ENCODE measurements at regions of chr7 and their contacts with region 1.

Region 1: GRCh38 chr7:25967278-25968204 is 184.5 kb upstream of the NFE2L3 start:
- DNase-seq: no peak
- H3K4me3 ChIP-seq: no peak overlapping the region
- H3K27ac ChIP-seq: no peak overlapping the region
- H3K4me1 ChIP-seq: no peaks in the 10 kb centered on the region
- H3K27me3 ChIP-seq: peaks cover 0 to 2% of the 10 kb centered on the region in 2 experiments
- CTCF ChIP-seq: no peak
- POLR2A ChIP-seq: no peak

Region 2: DNA sequence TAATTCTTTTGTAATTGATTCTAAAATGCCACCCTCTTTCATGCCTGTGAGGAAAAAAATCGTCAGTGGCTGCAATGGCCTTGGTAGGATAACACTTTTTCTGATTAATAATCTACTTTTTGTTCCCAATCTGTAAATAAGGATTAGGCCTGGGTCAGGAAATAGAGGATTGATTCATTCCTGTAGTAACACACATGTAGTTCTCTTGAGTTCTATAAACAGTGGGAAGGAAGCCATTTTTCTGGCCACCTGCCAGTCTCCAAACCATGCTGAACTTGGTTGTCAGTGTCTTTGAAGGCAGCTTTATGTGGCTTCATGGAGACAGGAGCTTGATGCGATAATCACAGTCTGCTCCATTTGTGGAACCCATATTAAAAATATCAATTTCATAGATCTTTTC is 15.1 kb after region 1 on chr7:
- CTCF ChIA-PET with region 1: no interaction called
- POLR2A ChIA-PET with region 1: no interaction called
- dilution Hi-C with region 1: no loop called
- intact Hi-C with region 1: no loop called
- DNase-seq: no peak
- H3K4me3 ChIP-seq: no peak overlapping the region
- H3K27ac ChIP-seq: no peak overlapping the region
- H3K4me1 ChIP-seq: no peaks in the 10 kb centered on the region
- H3K27me3 ChIP-seq: no peaks in the 10 kb centered on the region
- CTCF ChIP-seq: no peak
- POLR2A ChIP-seq: no peak

Region 3: GRCh38 chr7:26013551-26014083 is 46.1 kb after region 1 on chr7:
- CTCF ChIA-PET with region 1: no interaction called
- POLR2A ChIA-PET with region 1: no interaction called
- dilution Hi-C with region 1: no loop called
- intact Hi-C with region 1: loop called (anchors 1 kb)
- DNase-seq: no peak
- H3K4me3 ChIP-seq: no peak overlapping the region
- H3K27ac ChIP-seq: no peak overlapping the region
- H3K4me1 ChIP-seq: no peaks in the 10 kb centered on the region
- H3K27me3 ChIP-seq: no peaks in the 10 kb centered on the region
- CTCF ChIP-seq: no peak
- POLR2A ChIP-seq: no peak

Region 4: DNA sequence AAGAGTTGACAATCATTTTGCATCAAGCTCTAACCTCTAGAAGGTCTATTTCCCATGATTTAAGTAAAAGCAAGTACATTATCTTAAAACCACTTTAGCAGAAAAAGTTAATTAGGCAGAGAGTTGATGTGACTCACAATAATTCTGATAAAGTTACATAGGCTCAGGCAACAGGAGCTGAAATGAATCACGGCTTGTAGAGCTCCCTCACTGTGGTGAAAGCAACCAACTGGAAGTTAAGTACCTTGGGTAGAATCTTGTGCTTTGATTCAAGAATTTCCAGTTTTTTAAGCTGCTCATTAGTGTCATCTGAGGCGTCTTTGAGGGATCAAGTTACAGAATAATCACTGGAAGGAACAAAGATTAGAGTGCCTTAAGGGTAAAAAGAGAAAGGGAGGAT is 115.6 kb after region 1 on chr7:
- CTCF ChIA-PET with region 1: no interaction called
- POLR2A ChIA-PET with region 1: no interaction called
- dilution Hi-C with region 1: no loop called
- intact Hi-C with region 1: no loop called
- DNase-seq: no peak
- H3K4me3 ChIP-seq: no peak overlapping the region
- H3K27ac ChIP-seq: no peak overlapping the region
- H3K4me1 ChIP-seq: no peaks in the 10 kb centered on the region
- H3K27me3 ChIP-seq: peaks cover 24 to 39% of the 10 kb centered on the region in 2 experiments
- CTCF ChIP-seq: no peak
- POLR2A ChIP-seq: no peak